ENCODE measurements at regions of chr5 and their contacts with region 1.

Region 1: GRCh38 chr5:151239237-151239861 is 13.6 kb upstream of the GM2A start:
- DNase-seq: no peak
- ATAC-seq: peak; percentile 61
- H3K4me3 ChIP-seq: no peak overlapping the region; the same call in 1 of the 2 replicates
- H3K27ac ChIP-seq: no peak overlapping the region
- H3K4me1 ChIP-seq: peaks cover 70% of the 10 kb centered on the region
- H3K27me3 ChIP-seq: no peaks in the 10 kb centered on the region
- CTCF ChIP-seq: peak; percentile 66 to 72 (median 72)
- EP300 ChIP-seq: no peak
- POLR2A ChIP-seq: no peak
- RAD21 ChIP-seq: peak; percentile 82

Region 2: DNA sequence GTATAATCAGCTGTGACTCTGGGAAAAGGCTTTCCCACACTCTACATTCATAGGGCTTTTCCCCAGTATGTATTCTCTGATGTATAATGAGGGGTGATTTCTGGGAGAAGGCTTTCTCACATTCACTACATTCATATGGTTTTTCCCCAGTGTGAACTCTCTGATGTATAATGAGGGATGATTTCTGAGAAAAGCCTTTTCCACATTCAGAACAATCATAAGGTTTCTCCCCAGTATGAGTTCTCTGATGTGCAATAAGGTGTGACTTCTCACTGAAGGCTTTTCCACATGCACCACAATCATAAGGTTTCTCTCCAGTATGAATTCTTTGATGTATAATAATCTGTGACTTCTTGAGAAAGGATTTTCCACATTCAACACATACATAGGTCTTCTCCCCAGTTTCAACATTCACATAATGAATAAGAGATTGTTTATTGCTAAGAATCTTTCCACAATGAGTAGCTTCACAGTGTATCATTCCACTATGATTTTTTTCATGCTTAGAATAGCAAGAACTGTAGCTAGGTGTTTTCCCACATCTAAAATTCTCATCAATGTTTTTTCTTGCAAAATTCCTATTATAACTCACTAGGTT is 307.9 kb before region 1 on chr5:
- CTCF ChIA-PET with region 1: no interaction called
- POLR2A ChIA-PET with region 1: no interaction called
- RAD21 ChIA-PET with region 1: no interaction called
- SMC1A ChIA-PET with region 1: no interaction called
- in situ Hi-C with region 1: no loop called
- intact Hi-C with region 1: no loop called
- DNase-seq: no peak
- ATAC-seq: no peak
- H3K4me3 ChIP-seq: no peak overlapping the region
- H3K27ac ChIP-seq: no peak overlapping the region
- H3K4me1 ChIP-seq: no peaks in the 10 kb centered on the region
- H3K27me3 ChIP-seq: no peaks in the 10 kb centered on the region
- CTCF ChIP-seq: no peak
- EP300 ChIP-seq: no peak
- POLR2A ChIP-seq: no peak
- RAD21 ChIP-seq: no peak

Region 3: GRCh38 chr5:151141535-151141934 is 97.8 kb before region 1 on chr5:
- CTCF ChIA-PET with region 1: interaction called, 12 read pairs
- POLR2A ChIA-PET with region 1: interaction called, 7 read pairs
- RAD21 ChIA-PET with region 1: interaction called, 12 read pairs
- SMC1A ChIA-PET with region 1: interaction called, 5 read pairs
- in situ Hi-C with region 1: no loop called
- intact Hi-C with region 1: no loop called
- DNase-seq: no peak
- ATAC-seq: peak; percentile 90
- H3K4me3 ChIP-seq: peak overlapping the region; percentile 52
- H3K27ac ChIP-seq: peak overlapping the region; percentile 61
- H3K4me1 ChIP-seq: peaks cover 60% of the 10 kb centered on the region
- H3K27me3 ChIP-seq: no peaks in the 10 kb centered on the region
- CTCF ChIP-seq: no peak
- EP300 ChIP-seq: no peak
- POLR2A ChIP-seq: peak; percentile 67
- RAD21 ChIP-seq: 0 out of 2 replicates have a peak, but pooled peaks have one; percentile 13

Region 4: DNA sequence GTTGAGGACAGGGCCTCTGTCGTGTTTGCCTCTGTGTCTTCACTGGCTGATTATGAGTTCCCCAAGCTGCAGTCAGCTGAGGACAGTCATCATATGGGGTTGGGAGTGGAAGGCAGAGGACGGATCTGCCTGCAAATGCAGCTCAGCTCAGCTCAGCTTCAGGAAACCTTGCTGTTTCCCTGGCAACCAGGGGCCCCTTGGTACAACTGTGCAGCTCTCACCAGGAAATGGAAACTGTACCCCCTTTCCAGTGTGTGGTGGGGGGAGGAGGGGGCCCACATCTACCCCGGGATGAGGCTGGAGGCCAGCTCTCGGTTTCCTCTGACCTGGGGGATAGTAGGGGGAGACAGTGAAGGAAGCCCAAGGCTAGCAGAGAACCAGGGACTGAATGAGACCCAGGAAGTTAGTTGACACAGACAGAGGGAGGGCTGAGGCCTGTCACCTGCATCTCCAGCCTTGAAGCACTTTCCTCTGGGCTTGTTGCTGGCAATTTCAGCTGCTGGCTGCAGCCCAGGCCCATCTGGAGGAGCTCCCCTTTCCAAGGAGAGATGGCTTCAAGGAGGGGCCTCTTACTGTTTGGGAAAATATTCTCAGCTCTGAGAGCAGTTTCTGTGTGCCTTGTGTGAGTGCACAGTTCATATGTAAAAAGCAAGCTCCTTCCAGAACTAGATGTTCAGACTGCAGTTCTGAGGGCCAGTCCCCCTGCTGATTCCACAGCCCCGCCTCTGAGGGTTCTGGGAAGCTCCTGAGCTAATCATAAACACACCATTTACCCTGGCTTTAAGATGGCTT is 88.7 kb before region 1 on chr5:
- CTCF ChIA-PET with region 1: interaction called, 8 read pairs
- POLR2A ChIA-PET with region 1: interaction called, 4 read pairs
- RAD21 ChIA-PET with region 1: interaction called, 13 read pairs
- SMC1A ChIA-PET with region 1: interaction called, 8 read pairs
- in situ Hi-C with region 1: no loop called
- intact Hi-C with region 1: no loop called
- DNase-seq: peak; percentile 50
- ATAC-seq: peak; percentile 51
- H3K4me3 ChIP-seq: peak overlapping the region; percentile 57
- H3K27ac ChIP-seq: peak overlapping the region; percentile 89
- H3K4me1 ChIP-seq: peaks cover 62% of the 10 kb centered on the region
- H3K27me3 ChIP-seq: no peaks in the 10 kb centered on the region
- CTCF ChIP-seq: no peak
- EP300 ChIP-seq: no peak
- POLR2A ChIP-seq: peak; percentile 70
- RAD21 ChIP-seq: no peak

Region 5: GRCh38 chr5:151171529-151171928 is 67.8 kb before region 1 on chr5:
- CTCF ChIA-PET with region 1: interaction called, 105 read pairs
- POLR2A ChIA-PET with region 1: no interaction called
- RAD21 ChIA-PET with region 1: interaction called, 15 read pairs
- SMC1A ChIA-PET with region 1: interaction called, 10 read pairs
- in situ Hi-C with region 1: no loop called
- intact Hi-C with region 1: no loop called
- DNase-seq: no peak
- ATAC-seq: no peak
- H3K4me3 ChIP-seq: no peak overlapping the region
- H3K27ac ChIP-seq: no peak overlapping the region
- H3K4me1 ChIP-seq: no peaks in the 10 kb centered on the region
- H3K27me3 ChIP-seq: no peaks in the 10 kb centered on the region
- CTCF ChIP-seq: no peak
- EP300 ChIP-seq: no peak
- POLR2A ChIP-seq: no peak
- RAD21 ChIP-seq: no peak

Region 6: DNA sequence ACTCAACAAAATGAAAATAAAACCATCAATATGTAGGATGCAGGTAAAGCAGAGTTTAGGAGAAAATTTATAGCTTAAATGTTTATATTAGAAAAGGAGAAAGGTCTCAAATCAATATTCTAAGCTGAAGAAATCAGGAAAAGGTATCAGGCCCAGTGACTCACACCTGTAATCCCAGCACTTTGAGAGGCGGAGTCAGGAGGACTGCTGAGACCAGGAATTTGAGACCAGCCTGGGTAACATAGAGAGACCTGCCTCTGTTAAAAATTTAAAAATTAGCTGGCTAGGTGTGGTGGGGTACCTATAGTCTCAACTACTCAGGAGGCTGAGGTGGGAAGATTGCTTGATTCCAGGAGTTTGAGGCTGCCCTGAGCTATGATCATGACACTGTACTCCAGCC is 47.7 kb before region 1 on chr5:
- CTCF ChIA-PET with region 1: interaction called, 12 read pairs
- POLR2A ChIA-PET with region 1: no interaction called
- RAD21 ChIA-PET with region 1: interaction called, 8 read pairs
- SMC1A ChIA-PET with region 1: interaction called, 7 read pairs
- in situ Hi-C with region 1: no loop called
- intact Hi-C with region 1: no loop called
- DNase-seq: no peak
- ATAC-seq: no peak
- H3K4me3 ChIP-seq: no peak overlapping the region
- H3K27ac ChIP-seq: no peak overlapping the region
- H3K4me1 ChIP-seq: peaks cover 11% of the 10 kb centered on the region
- H3K27me3 ChIP-seq: no peaks in the 10 kb centered on the region
- CTCF ChIP-seq: no peak
- EP300 ChIP-seq: no peak
- POLR2A ChIP-seq: no peak
- RAD21 ChIP-seq: no peak

Region 7: GRCh38 chr5:151223469-151224264 is 15.7 kb before region 1 on chr5 and contains the start of gene CCDC69:
- CTCF ChIA-PET with region 1: interaction called, 293 read pairs
- POLR2A ChIA-PET with region 1: interaction called, 290 read pairs
- RAD21 ChIA-PET with region 1: interaction called, 42 read pairs
- SMC1A ChIA-PET with region 1: interaction called, 325 read pairs
- in situ Hi-C with region 1: no loop called
- intact Hi-C with region 1: loop called (anchors 1 kb)
- DNase-seq: no peak
- ATAC-seq: peak; percentile 82
- H3K4me3 ChIP-seq: peak within 1 kb of the TSS; percentile 97
- H3K27ac ChIP-seq: peak within 1 kb of the TSS; percentile 89
- H3K4me1 ChIP-seq: peaks cover 24% of the 10 kb centered on the region
- H3K27me3 ChIP-seq: no peaks in the 10 kb centered on the region
- CTCF ChIP-seq: no peak
- EP300 ChIP-seq: no peak
- POLR2A ChIP-seq: peak; percentile 80
- RAD21 ChIP-seq: 0 out of 2 replicates have a peak, but pooled peaks have one; percentile 16
- polyA plus RNA-seq, gene CCDC69: 13.5 to 21.4 TPM

Region 8: DNA sequence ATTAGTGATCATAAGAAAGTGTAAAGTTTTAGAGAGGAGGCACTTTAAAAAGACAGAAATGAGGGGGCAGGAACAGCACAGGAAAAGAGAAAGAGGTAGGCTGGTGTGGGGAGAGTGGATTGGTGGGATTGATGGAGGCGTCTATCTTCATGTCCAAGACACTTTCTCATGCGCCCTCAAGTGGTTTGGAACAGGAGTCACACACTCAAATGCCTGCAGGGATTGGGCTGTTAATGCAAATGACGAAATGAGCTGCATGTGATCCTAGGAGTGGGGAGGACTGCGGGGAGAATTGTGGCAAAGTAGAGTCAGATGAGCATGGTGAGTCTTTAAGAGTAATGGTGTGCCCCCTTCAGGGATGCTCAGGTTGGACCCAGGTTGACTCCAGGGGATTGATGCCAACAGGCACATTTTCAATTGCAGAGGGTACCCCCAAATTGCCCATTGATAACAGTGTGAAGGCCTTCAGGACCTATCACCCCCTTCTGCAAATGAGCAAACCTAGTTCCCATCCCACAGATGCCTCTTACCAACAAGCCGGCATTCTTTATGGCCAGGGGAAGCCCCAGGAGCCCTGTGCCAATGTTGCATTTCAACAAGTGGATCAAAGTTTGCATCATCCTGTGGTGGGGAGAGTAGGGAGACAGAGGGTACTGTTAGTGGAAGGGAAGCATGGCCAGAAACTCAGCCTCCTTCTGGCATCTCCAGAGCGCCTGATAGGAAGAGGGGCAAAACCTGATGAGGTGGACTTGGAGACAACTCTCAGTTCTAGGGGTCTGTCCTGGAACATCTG is 58.9 kb after region 1 on chr5:
- CTCF ChIA-PET with region 1: interaction called, 6 read pairs
- POLR2A ChIA-PET with region 1: interaction called, 3 read pairs
- RAD21 ChIA-PET with region 1: interaction called, 11 read pairs
- SMC1A ChIA-PET with region 1: interaction called, 10 read pairs
- in situ Hi-C with region 1: no loop called
- intact Hi-C with region 1: no loop called
- DNase-seq: peak; percentile 26
- ATAC-seq: peak; percentile 98
- H3K4me3 ChIP-seq: no peak overlapping the region
- H3K27ac ChIP-seq: no peak overlapping the region
- H3K4me1 ChIP-seq: no peaks in the 10 kb centered on the region
- H3K27me3 ChIP-seq: no peaks in the 10 kb centered on the region; a peak in 1 of 4 replicates
- CTCF ChIP-seq: peak; percentile 72 to 82 (median 75)
- EP300 ChIP-seq: no peak
- POLR2A ChIP-seq: no peak
- RAD21 ChIP-seq: peak; percentile 83

Measured in GM12878 (cell line).